ENCODE measurements at regions of chr2 and their contacts with region 1.

Region 1: GRCh38 chr2:25951071-25951547 is 31.2 kb downstream of the KIF3C start:
- DNase-seq: no peak
- H3K4me3 ChIP-seq: no peak overlapping the region
- H3K27ac ChIP-seq: no peak overlapping the region
- H3K4me1 ChIP-seq: no peaks in the 10 kb centered on the region
- H3K27me3 ChIP-seq: no peaks in the 10 kb centered on the region
- CTCF ChIP-seq: peak; percentile 83 to 96 (median 86)
- POLR2A ChIP-seq: no peak

Region 2: GRCh38 chr2:26144953-26145680 is 194.0 kb after region 1 on chr2:
- intact Hi-C with region 1: loop called (anchors 10 kb)
- DNase-seq: no peak
- H3K4me3 ChIP-seq: no peak overlapping the region
- H3K27ac ChIP-seq: no peak overlapping the region
- H3K4me1 ChIP-seq: no peaks in the 10 kb centered on the region
- H3K27me3 ChIP-seq: no peaks in the 10 kb centered on the region
- CTCF ChIP-seq: peak; percentile 73 to 86 (median 78)
- POLR2A ChIP-seq: no peak

Measured in vagina (tissue), 2 donors.